MCF 10A (cell line): ENCODE measurements at regions of chr2 and their contacts with region 1.

Region 1: GRCh38 chr2:197191177-197191939 is 119.2 kb downstream of the ANKRD44 start:
- DNase-seq: peak; percentile 61
- H3K4me3 Mint-ChIP-seq: no peak overlapping the region
- H3K27ac Mint-ChIP-seq: no peak overlapping the region
- H3K4me1 Mint-ChIP-seq: no peaks in the 10 kb centered on the region
- H3K27me3 Mint-ChIP-seq: no peaks in the 10 kb centered on the region
- CTCF ChIP-seq: peak; percentile 67

Region 2: DNA sequence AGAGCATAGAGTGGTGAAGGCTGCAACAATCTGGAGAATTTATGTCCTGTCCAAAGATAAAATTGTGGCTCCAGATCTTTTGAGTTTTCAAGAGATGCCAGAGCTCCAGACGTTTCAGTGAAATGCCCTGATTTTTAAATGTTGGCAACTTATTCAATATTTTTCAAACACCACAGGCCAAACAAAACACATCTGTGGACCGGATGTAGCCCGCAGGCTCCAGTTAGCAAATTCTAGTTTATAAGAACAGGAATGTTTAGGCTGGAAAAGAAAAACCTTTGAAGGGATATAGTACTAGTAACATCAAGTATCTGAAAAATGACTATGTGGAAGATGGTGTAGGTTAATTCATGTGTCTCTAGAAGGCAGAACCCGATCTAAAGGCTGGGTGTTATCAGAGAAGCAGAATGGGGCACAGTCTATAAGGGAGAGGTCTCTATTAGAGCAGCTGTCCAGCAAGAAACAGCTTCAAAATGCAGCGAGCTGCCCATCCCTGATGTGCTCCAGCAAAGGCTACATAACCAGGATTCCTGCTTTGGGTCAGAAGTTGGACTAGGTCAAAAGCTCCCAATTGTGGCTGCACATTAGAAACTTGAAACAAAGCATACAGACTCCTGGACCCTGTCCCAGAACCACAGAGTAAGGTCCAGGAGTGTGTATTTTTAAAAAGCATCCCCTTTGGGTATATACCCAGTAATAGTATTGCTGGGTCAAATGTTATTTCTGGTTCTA is 13.3 kb after region 1 on chr2:
- CTCF ChIA-PET with region 1: interaction called, 33 read pairs
- POLR2A ChIA-PET with region 1: no interaction called
- intact Hi-C with region 1: no loop called
- DNase-seq: no peak
- H3K4me3 Mint-ChIP-seq: no peak overlapping the region
- H3K27ac Mint-ChIP-seq: no peak overlapping the region
- H3K4me1 Mint-ChIP-seq: peaks cover 5% of the 10 kb centered on the region
- H3K27me3 Mint-ChIP-seq: no peaks in the 10 kb centered on the region
- CTCF ChIP-seq: no peak

Region 3: DNA sequence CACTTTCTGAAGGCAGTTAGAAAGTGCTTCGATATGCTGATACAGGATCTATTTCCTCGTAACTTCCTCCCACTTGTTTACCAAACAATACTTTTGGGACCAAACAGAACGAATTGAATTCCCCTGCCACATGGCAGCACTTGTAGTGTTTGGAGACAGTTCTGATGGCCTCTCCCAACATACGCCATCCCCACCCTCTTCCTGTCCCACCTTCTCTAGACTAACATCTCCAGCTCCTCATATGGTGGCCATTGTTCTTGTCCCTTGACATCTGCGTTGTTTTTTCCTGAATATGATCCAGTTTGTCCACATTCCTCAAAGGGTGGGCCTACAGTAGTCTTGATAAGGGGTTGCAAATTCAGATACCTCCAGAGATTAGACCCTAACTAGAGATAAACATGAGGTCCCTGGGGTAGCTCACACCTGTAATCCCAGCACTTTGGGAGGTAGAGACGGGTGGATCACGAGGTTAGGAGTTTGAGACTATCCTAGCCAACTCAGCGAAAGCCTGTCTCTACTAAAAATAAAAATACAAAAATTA is 172.7 kb after region 1 on chr2:
- CTCF ChIA-PET with region 1: interaction called, 14 read pairs
- POLR2A ChIA-PET with region 1: no interaction called
- intact Hi-C with region 1: no loop called
- DNase-seq: no peak
- H3K4me3 Mint-ChIP-seq: no peak overlapping the region
- H3K27ac Mint-ChIP-seq: no peak overlapping the region
- H3K4me1 Mint-ChIP-seq: no peaks in the 10 kb centered on the region
- H3K27me3 Mint-ChIP-seq: no peaks in the 10 kb centered on the region
- CTCF ChIP-seq: no peak

Region 4: DNA sequence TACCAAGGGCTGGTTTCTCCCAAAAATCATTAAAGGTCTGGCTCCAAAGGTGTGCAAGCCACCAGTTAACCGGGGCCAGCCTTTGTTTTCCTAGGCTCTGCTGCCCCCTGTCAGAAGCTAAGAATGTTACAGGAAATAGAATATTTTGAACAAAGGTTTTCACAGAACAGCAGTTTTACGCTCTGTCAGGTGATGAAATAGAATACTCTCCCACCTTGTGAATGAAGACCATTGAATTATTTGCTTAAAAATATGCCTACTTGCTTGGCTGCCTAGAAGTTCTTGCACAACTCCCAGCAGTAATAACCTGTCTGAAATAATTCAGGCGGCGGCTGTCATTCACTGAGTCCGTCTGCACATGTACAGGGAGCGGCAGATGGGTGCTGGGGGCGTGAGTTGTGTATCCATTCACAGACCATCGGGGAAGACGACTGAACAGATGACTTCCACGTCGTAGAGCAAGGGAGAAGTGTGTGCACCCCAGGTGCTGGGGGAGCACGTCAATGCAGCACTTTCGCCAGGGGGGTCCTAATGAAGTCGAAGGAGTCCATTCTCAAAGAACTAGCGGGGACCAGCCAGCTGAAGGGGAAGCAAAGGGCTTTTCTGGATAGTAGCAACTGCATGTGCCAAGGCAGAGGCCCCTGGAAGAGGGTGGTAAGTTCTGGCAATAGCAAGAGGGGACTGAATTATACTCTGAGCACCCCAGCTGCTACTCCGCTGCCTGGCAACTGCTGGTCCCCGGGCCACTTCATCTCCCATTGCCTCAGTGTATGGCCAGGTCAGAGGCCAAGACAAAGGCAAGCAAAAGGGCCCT is 187.3 kb after region 1 on chr2:
- CTCF ChIA-PET with region 1: interaction called, 32 read pairs
- POLR2A ChIA-PET with region 1: interaction called, 3 read pairs
- intact Hi-C with region 1: loop called (anchors 1 kb)
- DNase-seq: peak; percentile 74
- H3K4me3 Mint-ChIP-seq: peak overlapping the region; percentile 19
- H3K27ac Mint-ChIP-seq: no peak overlapping the region
- H3K4me1 Mint-ChIP-seq: peaks cover 16% of the 10 kb centered on the region
- H3K27me3 Mint-ChIP-seq: peaks cover 12% of the 10 kb centered on the region
- CTCF ChIP-seq: peak; percentile 70